ENCODE measurements at regions of chr10 and their contacts with region 1.

Region 1: GRCh38 chr10:95693668-95694534 is at the start of gene TCTN3:
- DNase-seq: peak; percentile 98 to 100 (median 99)
- ATAC-seq: peak; percentile 99
- H3K4me3 ChIP-seq: peak within 1 kb of the TSS; percentile 82 to 97
- H3K27ac ChIP-seq: peak within 1 kb of the TSS; percentile 35 to 82
- H3K4me1 ChIP-seq: peaks cover 11 to 48% of the 10 kb centered on the region in 2 donors
- H3K27me3 ChIP-seq: no peaks in the 10 kb centered on the region
- CTCF ChIP-seq: peak; percentile 99 to 100
- polyA plus RNA-seq, gene TCTN3: 57.3 to 65.1 (median 61.7) TPM

Region 2: GRCh38 chr10:95569368-95569767 is 124.5 kb before region 1 on chr10:
- intact Hi-C with region 1: no loop called
- DNase-seq: no peak
- ATAC-seq: no peak
- H3K4me3 ChIP-seq: no peak overlapping the region
- H3K27ac ChIP-seq: no peak overlapping the region
- H3K4me1 ChIP-seq: peaks cover 0 to 10% of the 10 kb centered on the region in 2 donors
- H3K27me3 ChIP-seq: no peaks in the 10 kb centered on the region
- CTCF ChIP-seq: no peak

Region 3: DNA sequence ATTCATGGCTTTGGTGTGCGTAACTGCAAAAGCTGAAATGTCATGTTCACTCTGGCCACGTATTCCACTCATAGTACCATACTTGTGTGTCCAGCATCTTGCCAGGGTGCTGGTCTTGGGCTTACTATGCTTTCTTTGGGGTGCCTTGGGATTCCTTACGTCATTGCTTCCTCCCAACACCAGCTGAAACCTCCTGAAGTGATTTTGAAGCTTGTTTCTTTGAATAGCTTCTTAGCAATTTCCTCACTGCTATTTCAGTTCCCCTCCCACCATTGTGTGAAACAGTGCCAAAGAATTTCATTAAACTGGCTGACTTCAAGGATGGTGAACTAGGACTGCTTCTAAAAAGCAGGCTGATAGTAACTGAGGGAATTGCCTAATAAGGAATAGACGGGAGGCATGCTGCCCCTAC is 99.0 kb after region 1 on chr10:
- intact Hi-C with region 1: no loop called
- DNase-seq: peak in 2 of 4 donors; percentile 49 to 64
- ATAC-seq: peak; percentile 70
- H3K4me3 ChIP-seq: no peak overlapping the region
- H3K27ac ChIP-seq: peak overlapping the region; percentile 71 to 85
- H3K4me1 ChIP-seq: peaks cover 14 to 40% of the 10 kb centered on the region in 2 donors
- H3K27me3 ChIP-seq: no peaks in the 10 kb centered on the region
- CTCF ChIP-seq: no peak

Region 4: GRCh38 chr10:95841661-95842498 is 148.0 kb after region 1 on chr10:
- intact Hi-C with region 1: loop called in 1 of 2 experiments (anchors 10 kb)
- DNase-seq: peak in 2 of 4 donors; percentile 63 to 73
- ATAC-seq: peak; percentile 87
- H3K4me3 ChIP-seq: no peak overlapping the region
- H3K27ac ChIP-seq: peak overlapping the region; percentile 56 to 69
- H3K4me1 ChIP-seq: peaks cover 7 to 24% of the 10 kb centered on the region in 2 donors
- H3K27me3 ChIP-seq: no peaks in the 10 kb centered on the region
- CTCF ChIP-seq: peak; percentile 64 to 71